Mammary epithelial cell (primary cell): ENCODE measurements at regions of chr5 and their contacts with region 1.

Region 1: GRCh38 chr5:146533260-146533857 is 17.4 kb upstream of the GPR151 start:
- DNase-seq: peak; percentile 55
- H3K4me3 ChIP-seq: no peak overlapping the region
- H3K27ac ChIP-seq: no peak overlapping the region
- H3K4me1 ChIP-seq: peaks cover 2% of the 10 kb centered on the region
- H3K27me3 ChIP-seq: no peaks in the 10 kb centered on the region
- CTCF ChIP-seq: peak; percentile 89 to 94

Region 2: GRCh38 chr5:145811834-145812625 is 721.3 kb before region 1 on chr5:
- CTCF ChIA-PET with region 1: no interaction called
- dilution Hi-C with region 1: no loop called
- in situ Hi-C with region 1: no loop called
- intact Hi-C with region 1: no loop called
- DNase-seq: peak; percentile 31
- H3K4me3 ChIP-seq: no peak overlapping the region
- H3K27ac ChIP-seq: no peak overlapping the region
- H3K4me1 ChIP-seq: no peaks in the 10 kb centered on the region
- H3K27me3 ChIP-seq: no peaks in the 10 kb centered on the region
- CTCF ChIP-seq: peak in 1 of 2 donors; percentile 52

Region 3: DNA sequence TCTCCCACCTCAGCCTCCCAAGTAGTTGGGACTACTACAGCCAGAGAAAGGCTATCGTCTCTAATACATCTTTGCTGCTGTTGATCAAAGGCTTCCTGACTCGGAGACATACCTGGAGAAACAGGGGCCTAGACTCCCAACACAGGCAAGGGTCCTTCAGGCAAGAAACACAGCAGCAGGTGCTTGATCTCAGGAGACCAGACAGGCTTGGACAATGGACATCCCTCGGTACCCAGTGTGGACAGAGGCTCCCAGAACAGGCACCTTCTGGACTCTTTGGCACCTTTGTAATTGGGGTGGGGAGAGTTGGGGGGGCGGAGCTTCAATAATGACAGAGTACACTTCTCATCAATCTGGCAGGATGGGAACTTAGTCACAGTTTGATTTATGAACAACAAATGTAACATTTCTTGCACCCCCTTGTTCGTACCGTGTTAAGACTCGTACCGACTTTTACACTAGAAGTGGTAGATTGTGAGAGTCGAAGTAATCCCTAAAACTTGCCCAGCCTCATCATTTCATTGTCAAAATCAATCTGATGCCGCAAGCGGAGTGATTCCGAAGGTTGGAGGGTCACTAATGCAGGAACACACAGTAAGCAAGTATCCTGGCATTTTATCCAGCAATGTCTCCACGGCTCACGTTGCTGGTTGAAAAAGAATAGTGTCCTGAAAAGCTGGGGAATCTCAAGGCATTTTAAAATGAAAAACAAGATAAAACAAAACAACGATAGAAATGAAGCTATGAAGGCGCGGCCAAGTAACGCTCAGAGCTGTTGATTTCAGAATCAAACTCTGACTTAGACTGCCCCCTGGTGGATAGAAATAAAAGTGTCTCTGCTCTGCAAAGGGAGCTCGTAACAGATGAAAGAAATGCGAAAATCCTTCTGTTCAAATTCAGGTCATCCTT is 655.1 kb after region 1 on chr5:
- CTCF ChIA-PET with region 1: interaction called, 24 read pairs
- dilution Hi-C with region 1: no loop called
- in situ Hi-C with region 1: loop called in 1 of 2 experiments (anchors 25 kb)
- intact Hi-C with region 1: loop called (anchors 2 kb)
- DNase-seq: peak; percentile 33
- H3K4me3 ChIP-seq: no peak overlapping the region
- H3K27ac ChIP-seq: no peak overlapping the region
- H3K4me1 ChIP-seq: no peaks in the 10 kb centered on the region
- H3K27me3 ChIP-seq: no peaks in the 10 kb centered on the region
- CTCF ChIP-seq: peak; percentile 73 to 76

Region 4: DNA sequence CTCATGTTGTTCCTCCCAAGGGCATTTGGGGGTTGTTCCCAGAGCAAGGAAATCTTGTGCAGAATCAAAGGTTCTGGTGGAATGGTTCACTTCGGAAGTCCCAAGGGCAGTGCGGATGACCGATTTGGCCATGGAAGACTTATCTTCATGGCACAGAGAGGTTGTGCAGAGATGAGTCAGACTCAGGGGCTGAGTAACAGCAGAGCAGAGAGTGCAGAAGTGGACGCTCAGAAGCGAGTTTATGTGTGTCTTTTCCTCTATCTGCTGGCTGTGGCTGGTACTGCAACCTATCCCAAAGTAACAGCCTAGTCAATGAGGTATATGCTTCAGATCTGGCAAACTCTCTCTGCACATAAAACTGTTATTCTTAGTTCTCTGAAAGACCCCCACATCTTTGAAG is 858.4 kb after region 1 on chr5:
- CTCF ChIA-PET with region 1: no interaction called
- dilution Hi-C with region 1: no loop called
- in situ Hi-C with region 1: loop called in 1 of 2 experiments (anchors 25 kb)
- intact Hi-C with region 1: no loop called
- DNase-seq: peak; percentile 61
- H3K4me3 ChIP-seq: no peak overlapping the region
- H3K27ac ChIP-seq: no peak overlapping the region
- H3K4me1 ChIP-seq: no peaks in the 10 kb centered on the region
- H3K27me3 ChIP-seq: no peaks in the 10 kb centered on the region
- CTCF ChIP-seq: peak; percentile 57 to 64